Endothelial cell of umbilical vein (primary cell): ENCODE measurements at regions of chr9 and their contacts with region 1.

Region 1: GRCh38 chr9:110015759-110016158 is 192.2 kb downstream of the C9orf152 start:
- DNase-seq: peak; percentile 95
- H3K4me3 ChIP-seq: no peak overlapping the region
- H3K27ac ChIP-seq: peak overlapping the region; percentile 100
- H3K4me1 ChIP-seq: peaks cover 28% of the 10 kb centered on the region
- H3K27me3 ChIP-seq: no peaks in the 10 kb centered on the region
- CTCF ChIP-seq: no peak
- POLR2A ChIP-seq: no peak

Region 2: DNA sequence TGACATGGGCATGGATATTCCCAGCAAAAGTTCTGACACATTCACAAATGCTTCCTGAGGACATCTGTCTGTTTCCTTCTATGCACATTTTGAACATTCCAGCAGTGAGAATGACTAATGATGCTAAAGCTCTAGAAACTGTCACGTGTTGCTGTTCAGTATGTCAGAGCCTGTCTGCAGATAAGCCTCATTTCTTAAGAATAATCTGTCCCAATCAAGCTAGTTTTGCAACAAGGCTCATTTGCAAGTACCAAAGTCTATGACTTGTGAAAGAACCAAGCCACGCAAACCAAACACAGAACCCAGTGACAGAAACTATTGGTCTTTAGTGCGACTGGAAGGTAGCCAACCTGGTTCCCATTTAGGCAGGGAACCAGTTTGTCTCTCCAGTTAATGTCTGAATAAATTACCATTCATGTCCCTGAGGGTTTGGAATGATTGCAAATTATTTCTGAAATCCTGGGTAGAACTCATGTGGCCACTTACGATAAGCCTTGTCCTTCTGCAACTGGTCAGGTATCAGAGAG is 13.7 kb after region 1 on chr9:
- CTCF ChIA-PET with region 1: interaction called, 7 read pairs
- POLR2A ChIA-PET with region 1: interaction called, 5 read pairs
- dilution Hi-C with region 1: no loop called
- intact Hi-C with region 1: loop called (anchors 1 kb)
- DNase-seq: peak; percentile 91
- H3K4me3 ChIP-seq: peak overlapping the region in 1 of 3 experiments; percentile 1
- H3K27ac ChIP-seq: peak overlapping the region; percentile 97
- H3K4me1 ChIP-seq: peaks cover 57% of the 10 kb centered on the region
- H3K27me3 ChIP-seq: no peaks in the 10 kb centered on the region
- CTCF ChIP-seq: no peak
- POLR2A ChIP-seq: peak; percentile 63